ENCODE measurements at regions of chr1 and their contacts with region 1.

Region 1: DNA sequence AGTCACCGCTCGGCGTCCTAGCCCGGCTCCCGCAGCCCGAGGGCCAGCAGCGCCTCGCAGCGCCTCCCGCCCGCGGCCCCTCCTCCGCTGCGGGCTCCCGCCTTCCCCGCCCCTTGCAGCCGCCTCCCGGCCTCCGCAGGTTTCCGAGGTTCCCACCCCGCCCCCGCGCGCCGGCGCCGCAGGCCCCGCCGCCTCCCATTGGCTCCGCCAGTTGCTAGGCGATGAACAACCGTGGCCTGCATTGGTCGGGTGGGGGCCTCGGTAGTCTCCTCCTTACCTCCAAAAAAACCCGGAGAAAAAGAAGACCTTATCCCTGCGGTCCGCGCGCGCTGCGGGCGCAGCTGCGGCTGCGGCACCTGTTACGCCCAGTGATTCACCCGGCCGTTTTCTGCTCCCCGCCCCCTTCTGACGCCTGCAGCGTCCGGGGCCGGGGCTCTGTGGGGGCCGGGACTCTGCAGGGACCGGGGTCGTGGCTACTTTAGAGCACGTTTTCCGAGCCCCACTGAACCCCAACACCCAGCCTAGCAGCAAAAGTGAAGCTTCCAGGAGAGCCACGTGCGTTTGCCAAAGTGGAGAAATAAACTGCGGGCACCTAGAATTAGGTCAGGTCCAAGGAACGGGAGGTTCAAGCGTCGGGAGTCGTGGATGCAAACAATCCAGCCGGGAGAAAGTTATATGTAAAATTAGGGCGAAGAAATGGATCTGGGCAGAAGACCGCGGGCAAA is at the start of gene SSX2IP:
- DNase-seq: peak; percentile 100
- H3K4me3 Mint-ChIP-seq: peak within 1 kb of the TSS; percentile 92
- H3K27ac Mint-ChIP-seq: peak within 1 kb of the TSS; percentile 91
- H3K4me1 Mint-ChIP-seq: peaks cover 59% of the 10 kb centered on the region
- H3K27me3 Mint-ChIP-seq: peaks cover 3% of the 10 kb centered on the region
- total RNA-seq, gene SSX2IP: 11.9 to 12.6 TPM

Region 2: GRCh38 chr1:83508485-83509151 is 1181.9 kb before region 1 on chr1:
- CTCF ChIA-PET with region 1: no interaction called
- intact Hi-C with region 1: loop called (anchors 5 kb)
- DNase-seq: peak; percentile 68
- H3K4me3 Mint-ChIP-seq: peak overlapping the region; percentile 46
- H3K27ac Mint-ChIP-seq: peak overlapping the region; percentile 91
- H3K4me1 Mint-ChIP-seq: peaks cover 46% of the 10 kb centered on the region
- H3K27me3 Mint-ChIP-seq: no peaks in the 10 kb centered on the region

Region 3: GRCh38 chr1:84433258-84434080 is 257.1 kb before region 1 on chr1:
- CTCF ChIA-PET with region 1: no interaction called
- intact Hi-C with region 1: loop called (anchors 2 kb)
- DNase-seq: peak; percentile 76
- H3K4me3 Mint-ChIP-seq: peak overlapping the region; percentile 63
- H3K27ac Mint-ChIP-seq: peak overlapping the region; percentile 25
- H3K4me1 Mint-ChIP-seq: peaks cover 15% of the 10 kb centered on the region
- H3K27me3 Mint-ChIP-seq: no peaks in the 10 kb centered on the region

Region 4: GRCh38 chr1:84573967-84574842 is 116.4 kb before region 1 on chr1 and contains the start of gene CTBS:
- CTCF ChIA-PET with region 1: no interaction called
- intact Hi-C with region 1: loop called (anchors 1 kb)
- DNase-seq: peak; percentile 86
- H3K4me3 Mint-ChIP-seq: peak within 1 kb of the TSS; percentile 95
- H3K27ac Mint-ChIP-seq: peak within 1 kb of the TSS; percentile 98
- H3K4me1 Mint-ChIP-seq: peaks cover 28% of the 10 kb centered on the region
- H3K27me3 Mint-ChIP-seq: no peaks in the 10 kb centered on the region
- total RNA-seq, gene CTBS: 21.1 to 21.2 TPM

Region 5: DNA sequence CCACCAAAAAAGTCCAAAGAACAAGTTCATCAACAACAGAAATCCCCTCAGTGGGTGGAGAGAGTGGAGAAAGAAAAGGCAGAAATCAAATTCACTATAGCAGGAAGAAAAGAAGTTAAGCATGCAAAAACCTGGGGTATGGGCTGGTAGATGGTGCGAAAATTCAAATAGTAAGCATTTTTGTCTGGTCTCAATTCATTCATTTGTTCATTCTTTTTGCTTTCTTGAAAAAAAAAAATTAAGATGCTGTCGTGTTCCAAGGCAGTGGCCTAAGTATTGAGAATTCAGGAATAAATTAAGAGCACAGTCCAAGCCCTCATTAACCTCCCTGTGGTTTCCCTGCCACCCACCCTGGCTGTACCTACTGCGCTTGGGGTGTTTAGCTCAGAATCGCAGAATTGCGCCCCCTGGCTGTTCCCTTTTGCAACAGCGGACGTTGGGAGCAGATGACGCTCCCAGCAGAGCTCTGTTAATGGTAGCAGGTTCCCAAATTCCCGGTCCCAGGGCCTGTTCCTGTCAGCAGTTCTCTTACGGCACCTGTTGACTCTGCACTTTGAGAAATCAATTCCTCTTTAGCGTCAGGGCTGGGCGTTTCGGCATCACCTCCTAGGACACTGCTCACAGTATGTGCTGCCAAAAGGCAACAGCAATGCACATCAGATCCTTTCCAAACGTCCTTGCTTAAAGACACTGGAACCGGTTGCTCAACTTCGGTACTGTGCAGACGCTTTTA is 33.7 kb after region 1 on chr1:
- CTCF ChIA-PET with region 1: interaction called, 10 read pairs
- intact Hi-C with region 1: loop called (anchors 2 kb)
- DNase-seq: peak; percentile 63
- H3K4me3 Mint-ChIP-seq: no peak overlapping the region
- H3K27ac Mint-ChIP-seq: no peak overlapping the region
- H3K4me1 Mint-ChIP-seq: peaks cover 3% of the 10 kb centered on the region
- H3K27me3 Mint-ChIP-seq: no peaks in the 10 kb centered on the region

Region 6: GRCh38 chr1:85259118-85259911 is 568.8 kb after region 1 on chr1 and contains the start of gene C1orf52:
- CTCF ChIA-PET with region 1: no interaction called
- intact Hi-C with region 1: loop called (anchors 1 kb)
- DNase-seq: peak; percentile 97
- H3K4me3 Mint-ChIP-seq: peak within 1 kb of the TSS; percentile 96
- H3K27ac Mint-ChIP-seq: peak within 1 kb of the TSS; percentile 89
- H3K4me1 Mint-ChIP-seq: peaks cover 38% of the 10 kb centered on the region
- H3K27me3 Mint-ChIP-seq: no peaks in the 10 kb centered on the region
- total RNA-seq, gene C1orf52: 28.3 to 29.5 TPM